ENCODE measurements at regions of chr3 and their contacts with region 1.

Region 1: GRCh38 chr3:150840802-150841515 is 64.3 kb downstream of the MINDY4B start:
- DNase-seq: no peak
- ATAC-seq: no peak
- H3K4me3 ChIP-seq: no peak overlapping the region
- H3K27ac ChIP-seq: no peak overlapping the region
- H3K4me1 ChIP-seq: no peaks in the 10 kb centered on the region
- H3K27me3 ChIP-seq: peaks cover 0 to 2% of the 10 kb centered on the region in 2 experiments; a peak in 1 of 5 replicates
- CTCF ChIP-seq: peak; percentile 20 to 85 (median 57); a peak in 5 of 6 replicates
- EP300 ChIP-seq: no peak
- POLR2A ChIP-seq: no peak
- RAD21 ChIP-seq: 0 out of 4 replicates have a peak, but pooled peaks of 1 of the 2 experiments have one; percentile 18

Region 2: DNA sequence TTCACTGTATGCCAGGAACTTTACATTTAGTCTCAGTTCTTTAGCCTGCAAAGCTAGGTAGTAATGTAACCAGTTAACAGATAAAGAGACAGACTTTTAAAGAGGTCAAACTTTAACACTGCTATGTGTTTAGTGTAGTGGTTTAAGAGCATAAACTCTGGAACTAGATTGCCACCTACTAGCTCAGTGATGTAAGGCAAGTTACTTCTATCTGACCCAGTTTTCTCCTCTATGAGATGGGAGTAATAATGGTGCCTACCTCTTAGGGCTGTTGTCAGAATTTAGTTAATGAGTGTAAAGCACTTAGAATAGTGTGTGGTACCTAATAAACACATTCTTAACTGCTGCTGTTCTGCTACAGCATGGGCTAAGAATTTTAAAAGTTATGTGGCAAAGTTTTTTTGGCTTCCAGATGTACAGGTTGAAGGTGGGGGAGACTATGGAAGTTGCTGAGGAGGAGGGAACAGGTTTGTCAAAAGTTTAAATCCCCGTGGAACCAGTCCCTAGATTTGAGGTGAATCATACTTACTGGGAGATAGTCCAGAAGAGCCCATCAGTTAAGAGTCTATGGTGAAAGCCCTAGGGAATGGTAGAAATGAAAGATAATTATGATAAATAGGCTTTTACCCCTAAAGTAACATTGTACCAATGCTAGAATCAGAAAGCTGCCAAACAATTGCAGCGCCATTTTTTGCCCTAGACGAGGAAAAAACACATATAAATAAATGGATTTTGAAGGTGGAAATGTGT is 419.0 kb before region 1 on chr3:
- CTCF ChIA-PET with region 1: no interaction called
- POLR2A ChIA-PET with region 1: no interaction called
- in situ Hi-C with region 1: no loop called
- intact Hi-C with region 1: no loop called
- DNase-seq: no peak
- ATAC-seq: peak; percentile 45
- H3K4me3 ChIP-seq: no peak overlapping the region
- H3K27ac ChIP-seq: no peak overlapping the region
- H3K4me1 ChIP-seq: peaks cover 0 to 28% of the 10 kb centered on the region in 2 experiments; a peak in 3 of 5 replicates
- H3K27me3 ChIP-seq: no peaks in the 10 kb centered on the region
- CTCF ChIP-seq: no peak
- EP300 ChIP-seq: no peak
- POLR2A ChIP-seq: peak; percentile 15; the same call in 1 of the 2 replicates
- RAD21 ChIP-seq: no peak

Region 3: GRCh38 chr3:150890298-150891230 is 49.6 kb after region 1 on chr3:
- CTCF ChIA-PET with region 1: no interaction called
- POLR2A ChIA-PET with region 1: no interaction called
- in situ Hi-C with region 1: no loop called
- intact Hi-C with region 1: loop called (anchors 1 kb)
- DNase-seq: no peak
- ATAC-seq: no peak
- H3K4me3 ChIP-seq: no peak overlapping the region
- H3K27ac ChIP-seq: no peak overlapping the region
- H3K4me1 ChIP-seq: no peaks in the 10 kb centered on the region
- H3K27me3 ChIP-seq: peaks cover 12 to 24% of the 10 kb centered on the region in 2 experiments
- CTCF ChIP-seq: no peak
- EP300 ChIP-seq: no peak
- POLR2A ChIP-seq: no peak
- RAD21 ChIP-seq: no peak